Panc1 (cell line): ENCODE measurements at regions of chrX and their contacts with region 1.

Region 1: GRCh38 chrX:129493643-129494042 is 29.6 kb downstream of the SMARCA1 start:
- DNase-seq: no peak
- ATAC-seq: peak; percentile 52; the same call in 1 of the 2 replicates
- H3K4me3 ChIP-seq: no peak overlapping the region
- H3K27ac ChIP-seq: no peak overlapping the region
- H3K4me1 ChIP-seq: 0 out of 2 replicates have a peak, but pooled peaks cover 3% of the 10 kb centered on the region
- H3K27me3 ChIP-seq: no peaks in the 10 kb centered on the region
- CTCF ChIP-seq: no peak

Region 2: GRCh38 chrX:129512409-129512808 is 18.8 kb after region 1 on chrX:
- CTCF ChIA-PET with region 1: no interaction called
- POLR2A ChIA-PET with region 1: no interaction called
- in situ Hi-C with region 1: no loop called
- intact Hi-C with region 1: loop called (anchors 1 kb)
- DNase-seq: no peak
- ATAC-seq: no peak
- H3K4me3 ChIP-seq: no peak overlapping the region
- H3K27ac ChIP-seq: no peak overlapping the region
- H3K4me1 ChIP-seq: no peaks in the 10 kb centered on the region
- H3K27me3 ChIP-seq: no peaks in the 10 kb centered on the region
- CTCF ChIP-seq: no peak